ENCODE measurements at regions of chr14 and their contacts with region 1.

Region 1: GRCh38 chr14:36661756-36662498 is at the start of gene PAX9:
- DNase-seq: peak; percentile 99
- ATAC-seq: peak; percentile 78
- H3K4me3 ChIP-seq: peak within 1 kb of the TSS; percentile 89
- H3K27ac ChIP-seq: peak within 1 kb of the TSS; percentile 77
- H3K4me1 ChIP-seq: peaks cover 25% of the 10 kb centered on the region
- H3K27me3 ChIP-seq: no peaks in the 10 kb centered on the region
- CTCF ChIP-seq: no peak
- total RNA-seq, gene PAX9: 14.3 and 14.9 TPM in 2 replicates

Region 2: GRCh38 chr14:36683083-36683740 is 21.3 kb after region 1 on chr14:
- CTCF ChIA-PET with region 1: no interaction called
- POLR2A ChIA-PET with region 1: interaction called, 5 read pairs
- intact Hi-C with region 1: loop called (anchors 2 kb)
- DNase-seq: peak; percentile 82
- ATAC-seq: peak; percentile 81
- H3K4me3 ChIP-seq: no peak overlapping the region; the same call in 1 of the 2 replicates
- H3K27ac ChIP-seq: peak overlapping the region; percentile 43
- H3K4me1 ChIP-seq: peaks cover 35% of the 10 kb centered on the region
- H3K27me3 ChIP-seq: no peaks in the 10 kb centered on the region
- CTCF ChIP-seq: no peak

Region 3: DNA sequence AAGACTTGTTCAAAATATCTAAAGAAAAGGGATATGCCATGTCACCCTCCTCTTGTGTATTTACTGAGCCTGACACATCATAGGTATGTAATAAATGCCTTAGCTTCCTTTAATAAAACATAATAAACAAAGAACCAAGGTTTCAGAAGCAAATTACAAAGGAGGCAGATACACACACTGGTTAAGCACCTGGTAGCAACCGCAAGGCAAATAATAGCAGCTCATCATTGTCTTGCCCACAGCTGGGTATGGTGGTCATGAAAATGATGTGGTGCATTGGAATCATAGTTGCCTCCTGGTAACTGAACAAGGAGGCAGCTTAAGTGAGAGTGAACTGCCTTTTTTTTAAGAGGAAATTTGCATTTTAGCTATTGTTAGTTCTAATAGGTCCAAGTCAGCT is 38.7 kb after region 1 on chr14:
- CTCF ChIA-PET with region 1: no interaction called
- POLR2A ChIA-PET with region 1: no interaction called
- intact Hi-C with region 1: loop called (anchors 1 kb)
- DNase-seq: peak; percentile 73
- ATAC-seq: peak; percentile 95
- H3K4me3 ChIP-seq: no peak overlapping the region
- H3K27ac ChIP-seq: peak overlapping the region; percentile 49
- H3K4me1 ChIP-seq: peaks cover 16% of the 10 kb centered on the region
- H3K27me3 ChIP-seq: no peaks in the 10 kb centered on the region
- CTCF ChIP-seq: no peak

Region 4: DNA sequence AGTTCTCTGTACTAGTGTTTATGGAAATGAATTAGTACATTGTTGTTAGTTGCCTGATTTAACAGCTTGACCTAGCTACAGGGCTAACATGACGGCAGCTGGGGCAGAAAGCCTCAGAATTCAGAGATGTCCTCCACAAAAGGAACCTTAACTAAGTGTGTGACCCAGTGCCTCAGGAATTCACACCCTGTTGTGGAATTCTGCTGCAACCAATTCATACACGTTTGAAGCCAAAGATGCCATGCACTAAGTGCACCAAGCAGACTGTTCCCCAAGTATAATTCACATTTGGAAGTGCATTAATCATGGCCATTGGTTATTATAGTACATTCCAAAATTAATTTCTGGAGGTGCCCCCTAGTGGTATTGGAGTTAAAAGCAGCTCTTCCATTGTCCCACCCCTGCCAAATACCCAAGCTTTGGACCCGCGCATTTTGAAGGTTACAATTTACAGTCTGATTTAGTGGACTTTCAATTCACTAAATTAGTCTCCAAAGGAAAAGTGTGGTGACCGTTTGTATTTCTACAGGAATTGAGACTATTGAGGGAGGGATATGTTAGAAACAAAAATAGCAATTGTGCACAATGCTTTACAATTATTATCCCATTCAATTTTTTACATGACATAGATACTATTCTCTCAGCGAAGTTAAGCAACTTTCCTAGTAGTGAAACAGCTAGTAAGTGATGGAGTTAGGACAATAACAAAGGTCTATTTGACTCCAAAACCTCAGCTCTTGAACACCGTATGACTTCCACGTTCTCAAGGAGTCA is 85.7 kb after region 1 on chr14:
- CTCF ChIA-PET with region 1: no interaction called
- POLR2A ChIA-PET with region 1: no interaction called
- intact Hi-C with region 1: loop called (anchors 2 kb)
- DNase-seq: peak; percentile 66
- ATAC-seq: peak; percentile 60
- H3K4me3 ChIP-seq: no peak overlapping the region
- H3K27ac ChIP-seq: no peak overlapping the region
- H3K4me1 ChIP-seq: peaks cover 18% of the 10 kb centered on the region
- H3K27me3 ChIP-seq: no peaks in the 10 kb centered on the region
- CTCF ChIP-seq: peak; percentile 92

Region 5: GRCh38 chr14:36788232-36788631 is 126.3 kb after region 1 on chr14:
- CTCF ChIA-PET with region 1: no interaction called
- POLR2A ChIA-PET with region 1: interaction called, 29 read pairs
- intact Hi-C with region 1: no loop called
- DNase-seq: no peak
- ATAC-seq: no peak
- H3K4me3 ChIP-seq: peak overlapping the region; percentile 10; the same call in 1 of the 2 replicates
- H3K27ac ChIP-seq: no peak overlapping the region
- H3K4me1 ChIP-seq: peaks cover 12% of the 10 kb centered on the region
- H3K27me3 ChIP-seq: no peaks in the 10 kb centered on the region
- CTCF ChIP-seq: no peak